PC-3 (cell line): ENCODE measurements at regions of chr12 and their contacts with region 1.

Region 1: DNA sequence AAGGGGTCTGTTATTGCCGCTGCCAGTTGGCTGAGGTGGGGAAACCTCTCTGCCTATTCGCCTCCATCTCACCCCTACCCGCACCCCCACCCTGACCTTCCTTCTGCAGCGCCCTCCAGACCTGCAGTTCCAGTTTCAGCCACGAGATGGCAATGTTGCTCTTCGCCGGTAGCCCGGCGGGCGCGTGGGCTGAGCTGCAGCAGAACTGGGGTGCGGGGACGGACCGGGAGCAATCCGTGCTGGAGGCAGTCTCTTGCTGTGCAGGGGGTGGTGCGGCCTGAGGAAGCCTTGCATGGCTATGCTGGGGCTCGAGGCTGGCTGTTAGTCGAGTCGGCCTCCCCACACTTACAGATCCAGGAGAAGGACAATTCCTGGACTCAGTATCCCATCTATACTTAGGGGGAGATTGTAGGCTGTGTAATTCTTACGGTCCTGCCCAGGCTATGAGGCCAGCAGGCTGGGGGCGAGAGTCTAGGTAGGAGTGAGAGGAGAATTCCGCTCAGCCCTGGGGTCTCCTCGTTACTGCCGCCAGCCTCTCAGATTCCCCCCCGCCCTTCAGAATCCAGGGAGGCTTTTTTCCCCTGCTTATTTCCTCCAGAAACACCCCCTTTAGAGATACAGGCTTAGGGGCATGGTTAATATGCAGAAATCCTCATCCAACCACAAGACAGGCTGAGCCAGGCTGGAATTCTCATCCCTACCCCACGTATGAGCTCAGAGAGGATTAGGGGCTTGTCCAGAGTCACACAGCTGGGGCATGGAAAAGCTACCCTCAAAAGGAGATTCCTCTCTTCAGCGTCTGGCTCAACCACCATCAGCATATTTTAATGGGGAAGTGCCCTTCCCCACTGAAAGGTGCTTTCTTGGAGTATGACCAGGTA is 118.2 kb downstream of the AACS start:
- DNase-seq: peak; percentile 92
- ATAC-seq: peak; percentile 70
- H3K4me3 ChIP-seq: no peak overlapping the region
- H3K27ac ChIP-seq: no peak overlapping the region
- H3K4me1 ChIP-seq: no peaks in the 10 kb centered on the region
- H3K27me3 ChIP-seq: peaks cover 79% of the 10 kb centered on the region
- CTCF ChIP-seq: peak; percentile 99

Region 2: GRCh38 chr12:125330645-125331341 is 147.4 kb after region 1 on chr12:
- CTCF ChIA-PET with region 1: no interaction called
- POLR2A ChIA-PET with region 1: no interaction called
- intact Hi-C with region 1: loop called (anchors 5 kb)
- DNase-seq: peak; percentile 57
- ATAC-seq: peak; percentile 98
- H3K4me3 ChIP-seq: peak overlapping the region; percentile 30; the same call in 1 of the 2 replicates
- H3K27ac ChIP-seq: no peak overlapping the region
- H3K4me1 ChIP-seq: no peaks in the 10 kb centered on the region
- H3K27me3 ChIP-seq: peaks cover 83% of the 10 kb centered on the region
- CTCF ChIP-seq: peak; percentile 90

Region 3: GRCh38 chr12:125402874-125403789 is 219.7 kb after region 1 on chr12:
- CTCF ChIA-PET with region 1: interaction called, 11 read pairs
- POLR2A ChIA-PET with region 1: no interaction called
- intact Hi-C with region 1: no loop called
- DNase-seq: peak; percentile 77
- ATAC-seq: peak; percentile 55
- H3K4me3 ChIP-seq: no peak overlapping the region
- H3K27ac ChIP-seq: no peak overlapping the region
- H3K4me1 ChIP-seq: no peaks in the 10 kb centered on the region
- H3K27me3 ChIP-seq: peaks cover 27% of the 10 kb centered on the region; the same call in 1 of the 2 replicates
- CTCF ChIP-seq: peak; percentile 93

Region 4: DNA sequence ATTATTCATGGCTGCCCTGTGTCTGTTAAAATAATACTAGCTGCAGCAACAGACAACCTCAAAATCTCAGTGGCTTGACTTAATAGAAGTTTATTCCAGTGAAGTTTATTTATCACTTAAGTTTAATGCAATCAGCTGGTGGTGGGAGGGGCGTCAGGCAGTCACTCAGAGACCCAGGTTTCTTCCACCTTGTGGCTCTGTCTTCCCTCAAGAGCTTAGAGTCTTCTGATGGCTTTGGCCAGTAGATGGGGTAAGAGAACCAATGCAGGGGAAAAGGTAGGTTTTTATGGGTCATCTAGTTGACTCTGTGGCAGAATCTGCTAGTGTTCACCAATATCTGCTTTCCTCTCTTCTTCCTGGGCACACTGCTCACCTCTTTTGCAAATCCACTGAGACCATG is 550.7 kb after region 1 on chr12:
- CTCF ChIA-PET with region 1: no interaction called
- POLR2A ChIA-PET with region 1: no interaction called
- intact Hi-C with region 1: no loop called
- DNase-seq: no peak
- ATAC-seq: no peak
- H3K4me3 ChIP-seq: no peak overlapping the region
- H3K27ac ChIP-seq: no peak overlapping the region
- H3K4me1 ChIP-seq: no peaks in the 10 kb centered on the region
- H3K27me3 ChIP-seq: no peaks in the 10 kb centered on the region
- CTCF ChIP-seq: peak; percentile 29; the same call in 1 of the 2 replicates

Region 5: DNA sequence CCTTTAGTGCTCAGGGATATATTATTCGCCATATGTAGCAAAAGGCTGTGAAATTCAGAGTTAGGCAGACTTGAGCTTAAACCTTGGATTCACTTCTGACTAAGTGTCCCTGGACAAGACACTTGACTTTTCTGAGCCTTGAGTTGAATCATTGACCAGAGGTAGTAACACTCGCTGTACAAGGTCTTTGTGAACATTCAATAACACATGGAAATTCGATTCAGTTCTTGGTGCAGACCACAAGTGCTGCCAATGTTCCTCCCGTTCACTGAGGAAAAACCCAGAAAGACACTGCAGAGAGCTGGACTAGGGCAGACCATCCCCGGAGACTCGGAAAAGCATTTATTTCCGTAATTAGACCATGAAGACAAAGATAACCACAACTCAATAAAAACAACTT is 783.2 kb after region 1 on chr12:
- CTCF ChIA-PET with region 1: no interaction called
- POLR2A ChIA-PET with region 1: no interaction called
- intact Hi-C with region 1: no loop called
- DNase-seq: no peak
- ATAC-seq: no peak
- H3K4me3 ChIP-seq: no peak overlapping the region
- H3K27ac ChIP-seq: no peak overlapping the region
- H3K4me1 ChIP-seq: no peaks in the 10 kb centered on the region
- H3K27me3 ChIP-seq: peaks cover 23% of the 10 kb centered on the region; the same call in 1 of the 2 replicates
- CTCF ChIP-seq: no peak

Region 6: DNA sequence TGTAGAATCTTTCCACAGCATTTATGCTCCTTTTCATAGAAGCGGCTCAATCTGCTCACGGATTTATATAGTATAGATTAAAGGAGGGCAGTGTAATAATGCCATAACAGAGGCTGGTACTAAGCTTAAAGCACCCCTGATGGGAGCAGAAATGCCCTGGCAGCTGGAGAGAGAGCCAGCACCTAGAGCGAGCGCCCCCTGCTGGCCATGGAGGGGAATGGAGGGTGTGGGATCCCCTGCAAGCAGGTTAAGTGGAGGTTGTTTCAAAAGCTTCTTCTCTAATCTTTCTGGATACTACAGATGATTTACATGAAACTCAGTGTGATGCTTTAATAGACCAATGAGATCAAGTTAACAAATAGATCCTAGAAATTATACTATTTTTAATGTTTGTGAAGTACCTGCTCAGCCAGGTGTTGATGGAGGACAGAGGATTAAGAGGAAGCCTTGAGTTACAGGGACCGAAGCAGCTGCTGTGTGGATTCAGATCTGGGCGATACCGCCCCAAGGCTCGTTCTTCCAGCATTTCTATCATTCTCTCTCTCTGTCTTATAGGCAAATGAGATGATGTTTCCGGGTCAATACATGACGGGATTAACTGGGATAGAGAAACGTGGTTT is 1564.2 kb after region 1 on chr12:
- CTCF ChIA-PET with region 1: no interaction called
- POLR2A ChIA-PET with region 1: no interaction called
- intact Hi-C with region 1: loop called (anchors 5 kb)
- DNase-seq: peak; percentile 66
- ATAC-seq: peak; percentile 94
- H3K4me3 ChIP-seq: no peak overlapping the region
- H3K27ac ChIP-seq: no peak overlapping the region
- H3K4me1 ChIP-seq: no peaks in the 10 kb centered on the region
- H3K27me3 ChIP-seq: peaks cover 85% of the 10 kb centered on the region
- CTCF ChIP-seq: peak; percentile 99

Region 7: GRCh38 chr12:126874427-126875026 is 1691.1 kb after region 1 on chr12:
- CTCF ChIA-PET with region 1: interaction called, 4 read pairs
- POLR2A ChIA-PET with region 1: no interaction called
- intact Hi-C with region 1: loop called (anchors 5 kb)
- DNase-seq: peak; percentile 78
- ATAC-seq: peak; percentile 98
- H3K4me3 ChIP-seq: no peak overlapping the region
- H3K27ac ChIP-seq: no peak overlapping the region
- H3K4me1 ChIP-seq: no peaks in the 10 kb centered on the region
- H3K27me3 ChIP-seq: peaks cover 80% of the 10 kb centered on the region
- CTCF ChIP-seq: peak; percentile 98